ENCODE measurements at regions of chr1 and their contacts with region 1.

Region 1: GRCh38 chr1:231240883-231241735 is at the start of gene GNPAT:
- DNase-seq: peak; percentile 50
- ATAC-seq: peak; percentile 96
- H3K4me3 ChIP-seq: peak within 1 kb of the TSS; percentile 98
- H3K27ac ChIP-seq: peak within 1 kb of the TSS; percentile 72
- H3K4me1 ChIP-seq: peaks cover 5% of the 10 kb centered on the region; the same call in 1 of the 2 replicates
- H3K27me3 ChIP-seq: no peaks in the 10 kb centered on the region
- CTCF ChIP-seq: no peak
- EP300 ChIP-seq: no peak
- POLR2A ChIP-seq: peak; percentile 99
- RAD21 ChIP-seq: no peak
- polyA plus RNA-seq, gene GNPAT: 24.0 to 30.1 TPM

Region 2: GRCh38 chr1:231295938-231296337 is 54.8 kb after region 1 on chr1:
- CTCF ChIA-PET with region 1: no interaction called
- POLR2A ChIA-PET with region 1: no interaction called
- RAD21 ChIA-PET with region 1: no interaction called
- SMC1A ChIA-PET with region 1: no interaction called
- in situ Hi-C with region 1: no loop called
- intact Hi-C with region 1: no loop called
- DNase-seq: no peak
- ATAC-seq: no peak
- H3K4me3 ChIP-seq: no peak overlapping the region
- H3K27ac ChIP-seq: no peak overlapping the region
- H3K4me1 ChIP-seq: no peaks in the 10 kb centered on the region
- H3K27me3 ChIP-seq: no peaks in the 10 kb centered on the region
- CTCF ChIP-seq: no peak
- EP300 ChIP-seq: no peak
- POLR2A ChIP-seq: no peak
- RAD21 ChIP-seq: no peak

Region 3: GRCh38 chr1:231337472-231338269 is 96.6 kb after region 1 on chr1 and contains the start of gene EXOC8:
- CTCF ChIA-PET with region 1: interaction called, 3 read pairs
- POLR2A ChIA-PET with region 1: interaction called, 3 read pairs
- RAD21 ChIA-PET with region 1: no interaction called
- SMC1A ChIA-PET with region 1: interaction called, 5 read pairs
- in situ Hi-C with region 1: no loop called
- intact Hi-C with region 1: loop called (anchors 5 kb)
- DNase-seq: peak; percentile 99
- ATAC-seq: peak; percentile 84
- H3K4me3 ChIP-seq: peak within 1 kb of the TSS; percentile 91
- H3K27ac ChIP-seq: peak within 1 kb of the TSS; percentile 95
- H3K4me1 ChIP-seq: peaks cover 8% of the 10 kb centered on the region
- H3K27me3 ChIP-seq: no peaks in the 10 kb centered on the region
- CTCF ChIP-seq: peak; percentile 3 to 29 (median 10); a peak in 2 of 6 replicates
- EP300 ChIP-seq: no peak
- POLR2A ChIP-seq: peak; percentile 88
- RAD21 ChIP-seq: no peak
- polyA plus RNA-seq, gene EXOC8: 2.0 to 3.2 TPM

Measured in GM12878 (cell line).